Activated CD4-positive, alpha-beta T cell treated with anti-CD3 and anti-CD28 coated beads for 36 hours (primary cell): ENCODE measurements at regions of chr21 and their contacts with region 1.

Region 1: DNA sequence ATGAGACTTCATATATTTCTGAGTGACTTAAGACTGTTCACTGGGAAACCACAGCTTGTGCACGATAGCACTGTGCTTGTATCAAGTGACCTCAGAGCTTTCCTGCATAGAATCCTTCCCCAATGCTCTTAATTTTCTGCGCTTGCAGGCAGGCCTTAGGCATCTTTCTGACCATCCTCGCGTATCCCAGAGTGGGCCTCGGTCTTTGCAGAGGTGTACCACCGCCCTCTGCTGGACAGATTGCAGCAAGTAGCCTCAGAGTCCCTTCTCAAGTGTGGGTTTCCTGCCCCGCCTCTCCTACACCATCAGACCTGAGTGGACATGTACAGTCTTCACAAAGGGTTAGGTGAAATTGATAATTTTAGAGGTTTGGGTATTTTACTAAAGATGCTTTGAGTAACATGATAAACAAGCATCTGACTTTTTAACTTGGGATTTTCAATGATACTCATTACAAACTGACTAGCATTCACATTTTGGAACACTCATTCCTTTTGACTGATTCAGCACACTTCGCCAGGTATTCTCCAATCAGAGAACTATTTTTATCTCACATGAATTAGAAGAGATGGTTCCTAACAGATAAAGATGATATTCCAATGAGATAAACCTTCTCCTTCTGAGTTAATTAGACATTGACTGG is 246.5 kb upstream of the USP25 start:
- DNase-seq: peak; percentile 90
- ATAC-seq: peak; percentile 95
- H3K4me3 Mint-ChIP-seq: no peak overlapping the region
- H3K27ac Mint-ChIP-seq: no peak overlapping the region
- H3K4me1 Mint-ChIP-seq: peaks cover 21% of the 10 kb centered on the region
- H3K27me3 Mint-ChIP-seq: no peaks in the 10 kb centered on the region

Region 2: GRCh38 chr21:14403681-14404318 is 1079.5 kb before region 1 on chr21:
- CTCF ChIA-PET with region 1: interaction called, 3 read pairs
- POLR2A ChIA-PET with region 1: no interaction called
- intact Hi-C with region 1: loop called (anchors 2 to 5 kb)
- DNase-seq: no peak
- ATAC-seq: no peak
- H3K4me3 Mint-ChIP-seq: no peak overlapping the region
- H3K27ac Mint-ChIP-seq: no peak overlapping the region
- H3K4me1 Mint-ChIP-seq: no peaks in the 10 kb centered on the region
- H3K27me3 Mint-ChIP-seq: no peaks in the 10 kb centered on the region

Region 3: GRCh38 chr21:14880922-14881321 is 602.3 kb before region 1 on chr21:
- CTCF ChIA-PET with region 1: no interaction called
- POLR2A ChIA-PET with region 1: no interaction called
- intact Hi-C with region 1: loop called in 1 of 2 experiments (anchors 5 kb)
- DNase-seq: no peak
- ATAC-seq: no peak
- H3K4me3 Mint-ChIP-seq: no peak overlapping the region
- H3K27ac Mint-ChIP-seq: no peak overlapping the region
- H3K4me1 Mint-ChIP-seq: peaks cover 2% of the 10 kb centered on the region
- H3K27me3 Mint-ChIP-seq: no peaks in the 10 kb centered on the region

Region 4: GRCh38 chr21:15493646-15494045 is 10.4 kb after region 1 on chr21:
- CTCF ChIA-PET with region 1: interaction called, 15 read pairs
- POLR2A ChIA-PET with region 1: no interaction called
- intact Hi-C with region 1: no loop called
- DNase-seq: no peak
- ATAC-seq: no peak
- H3K4me3 Mint-ChIP-seq: no peak overlapping the region
- H3K27ac Mint-ChIP-seq: no peak overlapping the region
- H3K4me1 Mint-ChIP-seq: no peaks in the 10 kb centered on the region
- H3K27me3 Mint-ChIP-seq: no peaks in the 10 kb centered on the region

Region 5: DNA sequence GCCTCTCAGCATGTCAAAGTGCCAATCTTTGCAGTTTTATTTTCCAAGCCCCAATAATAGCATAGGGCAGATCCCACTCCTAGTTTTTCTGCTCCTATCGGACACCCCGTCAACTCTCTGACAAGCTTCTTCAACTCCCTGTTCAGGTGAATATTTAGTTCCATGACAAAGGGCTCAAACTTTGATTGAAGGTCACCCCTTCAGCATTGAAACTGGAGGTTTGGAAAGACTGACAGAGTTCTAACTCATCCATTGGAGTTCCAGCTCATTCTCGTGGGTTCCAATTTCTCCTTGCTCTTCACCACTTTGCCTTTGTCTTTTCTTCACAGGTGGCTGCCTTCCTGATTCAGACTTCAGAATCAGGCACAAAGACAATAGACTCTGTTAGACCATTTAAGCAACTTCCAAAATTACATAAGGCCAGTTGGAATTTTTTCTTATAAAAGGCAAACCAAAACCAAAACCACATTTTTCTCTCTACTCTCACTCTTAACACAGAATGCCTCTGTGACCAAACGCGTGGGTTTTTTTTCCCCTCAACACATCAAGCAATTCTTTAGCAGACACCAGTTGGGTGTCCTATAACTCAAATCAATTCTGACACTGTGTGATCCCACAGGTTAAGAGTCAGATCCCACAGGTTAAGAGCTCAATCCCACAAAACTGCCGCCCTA is 77.3 kb after region 1 on chr21:
- CTCF ChIA-PET with region 1: no interaction called
- POLR2A ChIA-PET with region 1: no interaction called
- intact Hi-C with region 1: no loop called
- DNase-seq: peak; percentile 23
- ATAC-seq: peak; percentile 55
- H3K4me3 Mint-ChIP-seq: no peak overlapping the region
- H3K27ac Mint-ChIP-seq: no peak overlapping the region
- H3K4me1 Mint-ChIP-seq: peaks cover 9% of the 10 kb centered on the region
- H3K27me3 Mint-ChIP-seq: peaks cover 2% of the 10 kb centered on the region

Region 6: DNA sequence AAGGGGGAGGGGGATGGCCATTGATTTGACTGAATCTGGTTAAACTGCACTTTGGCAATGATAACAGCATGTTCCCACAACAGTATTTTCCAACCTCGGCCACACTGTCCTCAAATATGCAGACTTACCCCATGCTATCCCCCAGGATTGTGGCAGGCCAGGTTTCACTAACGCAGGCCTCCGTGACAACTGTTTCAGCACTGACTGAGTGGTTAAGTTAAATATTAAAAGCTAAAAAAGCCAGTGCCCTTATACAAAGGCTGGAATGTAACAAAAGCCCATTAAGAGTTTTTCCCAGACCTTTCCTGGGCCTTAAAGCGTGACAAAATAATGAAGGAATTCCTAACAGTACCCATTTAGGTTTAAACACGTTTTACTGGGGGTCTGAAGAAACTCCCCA is 449.5 kb after region 1 on chr21:
- CTCF ChIA-PET with region 1: no interaction called
- POLR2A ChIA-PET with region 1: no interaction called
- intact Hi-C with region 1: no loop called
- DNase-seq: no peak
- ATAC-seq: no peak
- H3K4me3 Mint-ChIP-seq: no peak overlapping the region
- H3K27ac Mint-ChIP-seq: no peak overlapping the region
- H3K4me1 Mint-ChIP-seq: no peaks in the 10 kb centered on the region
- H3K27me3 Mint-ChIP-seq: no peaks in the 10 kb centered on the region